ENCODE measurements at regions of chr3 and their contacts with region 1.

Region 1: DNA sequence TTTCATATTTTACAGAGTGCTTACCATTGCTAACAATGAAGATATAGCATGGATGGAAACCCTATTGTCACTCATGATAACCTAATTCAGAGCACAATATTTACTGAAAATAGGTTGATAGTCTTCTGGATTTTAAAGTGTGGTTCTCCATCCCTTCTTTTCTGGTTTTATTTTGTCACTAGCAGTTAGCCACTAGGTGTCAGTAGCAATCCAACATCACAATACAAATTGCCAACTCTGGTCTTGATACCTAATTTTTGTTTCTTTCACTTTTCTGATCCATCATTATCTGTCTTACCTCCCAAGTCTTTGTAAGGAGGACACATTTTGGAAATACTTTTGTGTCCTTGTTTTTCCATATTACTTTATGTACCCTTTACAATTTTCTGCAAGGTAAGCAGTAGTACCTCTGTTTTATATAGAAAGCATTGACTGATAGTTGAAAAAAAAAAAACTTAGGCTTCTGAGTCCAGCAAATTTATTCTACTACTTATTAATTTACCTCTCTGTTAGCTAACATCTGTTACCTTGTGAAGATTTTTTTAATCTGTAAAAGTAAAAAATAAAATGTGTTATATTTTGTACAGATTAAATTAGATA is 28.3 kb upstream of the CRYBG3 start:
- DNase-seq: peak; percentile 65
- H3K4me3 ChIP-seq: no peak overlapping the region
- H3K27ac ChIP-seq: no peak overlapping the region
- H3K4me1 ChIP-seq: no peaks in the 10 kb centered on the region
- H3K27me3 ChIP-seq: no peaks in the 10 kb centered on the region
- CTCF ChIP-seq: peak; percentile 80

Region 2: GRCh38 chr3:97895216-97895615 is 101.7 kb after region 1 on chr3:
- CTCF ChIA-PET with region 1: no interaction called
- POLR2A ChIA-PET with region 1: no interaction called
- intact Hi-C with region 1: loop called (anchors 5 kb)
- DNase-seq: no peak
- H3K4me3 ChIP-seq: no peak overlapping the region
- H3K27ac ChIP-seq: no peak overlapping the region
- H3K4me1 ChIP-seq: peaks cover 15% of the 10 kb centered on the region
- H3K27me3 ChIP-seq: no peaks in the 10 kb centered on the region
- CTCF ChIP-seq: no peak

Region 3: DNA sequence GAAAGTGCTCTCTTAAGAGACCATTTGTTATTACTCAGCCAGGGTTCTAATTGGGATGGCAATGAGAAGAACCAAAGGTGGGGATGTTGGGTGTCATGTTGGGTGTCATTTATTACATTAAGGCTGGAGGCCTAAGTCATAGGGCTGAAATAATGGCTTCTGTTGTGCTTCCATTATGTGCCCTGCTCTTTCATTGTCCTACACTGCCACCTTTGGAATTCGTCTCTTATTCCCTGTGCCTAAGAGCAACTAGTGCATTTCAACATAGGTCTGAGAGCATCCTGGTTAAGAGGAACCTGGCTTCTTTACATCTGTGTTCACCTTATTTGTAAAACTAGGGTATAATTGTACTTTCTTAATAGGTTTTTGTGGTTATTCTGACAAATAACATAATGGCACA is 146.5 kb after region 1 on chr3:
- CTCF ChIA-PET with region 1: no interaction called
- POLR2A ChIA-PET with region 1: no interaction called
- intact Hi-C with region 1: loop called (anchors 1 kb)
- DNase-seq: peak; percentile 33
- H3K4me3 ChIP-seq: no peak overlapping the region
- H3K27ac ChIP-seq: no peak overlapping the region
- H3K4me1 ChIP-seq: no peaks in the 10 kb centered on the region
- H3K27me3 ChIP-seq: no peaks in the 10 kb centered on the region
- CTCF ChIP-seq: peak; percentile 40; the same call in 1 of the 2 replicates

Region 4: DNA sequence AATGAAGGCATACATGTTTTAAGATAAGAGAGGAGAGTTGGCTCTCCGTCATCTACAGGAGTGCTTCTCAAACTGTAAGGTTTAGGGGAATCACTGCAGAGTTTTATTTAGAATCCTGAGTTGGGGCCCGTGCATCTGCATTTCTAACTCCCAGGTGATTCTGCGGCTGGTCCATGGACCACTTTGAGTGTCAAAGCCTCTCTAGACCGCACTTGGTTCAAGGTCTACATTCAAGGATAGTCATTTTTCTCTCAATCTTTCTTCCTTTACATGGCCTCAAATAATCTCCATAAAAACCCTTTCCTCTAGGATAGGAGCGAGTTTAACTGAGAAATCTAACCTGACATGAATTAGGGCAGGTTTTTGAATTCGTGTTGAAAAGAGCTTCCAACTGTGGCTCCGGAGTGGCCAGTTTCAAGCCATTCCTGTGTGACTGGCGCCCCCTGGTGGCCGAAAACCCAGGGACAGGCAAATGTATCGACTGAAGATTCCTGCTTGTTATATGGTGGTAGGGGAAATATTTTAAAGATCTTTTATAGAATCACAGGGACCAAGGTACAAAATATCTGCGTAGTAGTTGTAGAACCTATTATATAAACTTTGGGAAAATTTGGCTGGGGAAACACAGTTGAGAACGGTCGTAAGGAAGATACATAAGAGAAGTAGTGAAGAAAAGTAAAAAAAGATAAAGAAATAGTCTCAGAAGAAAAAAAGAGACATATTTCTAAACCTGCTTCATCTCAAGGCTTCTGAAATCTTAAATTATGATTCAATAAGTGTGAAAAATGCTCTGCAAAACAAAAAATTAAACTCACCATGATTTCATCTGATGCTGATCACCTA is 229.7 kb after region 1 on chr3:
- CTCF ChIA-PET with region 1: interaction called, 4 read pairs
- POLR2A ChIA-PET with region 1: no interaction called
- intact Hi-C with region 1: loop called (anchors 1 kb)
- DNase-seq: peak; percentile 85
- H3K4me3 ChIP-seq: no peak overlapping the region
- H3K27ac ChIP-seq: no peak overlapping the region
- H3K4me1 ChIP-seq: peaks cover 8% of the 10 kb centered on the region
- H3K27me3 ChIP-seq: no peaks in the 10 kb centered on the region
- CTCF ChIP-seq: peak; percentile 95